Endothelial cell of umbilical vein (primary cell): ENCODE measurements at regions of chr12 and their contacts with region 1.

Region 1: GRCh38 chr12:91382081-91382543 is 199.5 kb upstream of the DCN start:
- DNase-seq: peak; percentile 91
- H3K4me3 ChIP-seq: peak overlapping the region; percentile 17 to 66 (median 34)
- H3K27ac ChIP-seq: peak overlapping the region; percentile 54
- H3K4me1 ChIP-seq: peaks cover 8% of the 10 kb centered on the region
- H3K27me3 ChIP-seq: no peaks in the 10 kb centered on the region
- CTCF ChIP-seq: peak; percentile 80 to 83
- POLR2A ChIP-seq: no peak

Region 2: GRCh38 chr12:91400271-91400670 is 18.2 kb after region 1 on chr12:
- CTCF ChIA-PET with region 1: interaction called, 56 read pairs
- POLR2A ChIA-PET with region 1: interaction called, 3 read pairs
- dilution Hi-C with region 1: no loop called
- intact Hi-C with region 1: no loop called
- DNase-seq: peak; percentile 93
- H3K4me3 ChIP-seq: no peak overlapping the region
- H3K27ac ChIP-seq: peak overlapping the region; percentile 48
- H3K4me1 ChIP-seq: peaks cover 22% of the 10 kb centered on the region
- H3K27me3 ChIP-seq: no peaks in the 10 kb centered on the region
- CTCF ChIP-seq: no peak
- POLR2A ChIP-seq: no peak

Region 3: DNA sequence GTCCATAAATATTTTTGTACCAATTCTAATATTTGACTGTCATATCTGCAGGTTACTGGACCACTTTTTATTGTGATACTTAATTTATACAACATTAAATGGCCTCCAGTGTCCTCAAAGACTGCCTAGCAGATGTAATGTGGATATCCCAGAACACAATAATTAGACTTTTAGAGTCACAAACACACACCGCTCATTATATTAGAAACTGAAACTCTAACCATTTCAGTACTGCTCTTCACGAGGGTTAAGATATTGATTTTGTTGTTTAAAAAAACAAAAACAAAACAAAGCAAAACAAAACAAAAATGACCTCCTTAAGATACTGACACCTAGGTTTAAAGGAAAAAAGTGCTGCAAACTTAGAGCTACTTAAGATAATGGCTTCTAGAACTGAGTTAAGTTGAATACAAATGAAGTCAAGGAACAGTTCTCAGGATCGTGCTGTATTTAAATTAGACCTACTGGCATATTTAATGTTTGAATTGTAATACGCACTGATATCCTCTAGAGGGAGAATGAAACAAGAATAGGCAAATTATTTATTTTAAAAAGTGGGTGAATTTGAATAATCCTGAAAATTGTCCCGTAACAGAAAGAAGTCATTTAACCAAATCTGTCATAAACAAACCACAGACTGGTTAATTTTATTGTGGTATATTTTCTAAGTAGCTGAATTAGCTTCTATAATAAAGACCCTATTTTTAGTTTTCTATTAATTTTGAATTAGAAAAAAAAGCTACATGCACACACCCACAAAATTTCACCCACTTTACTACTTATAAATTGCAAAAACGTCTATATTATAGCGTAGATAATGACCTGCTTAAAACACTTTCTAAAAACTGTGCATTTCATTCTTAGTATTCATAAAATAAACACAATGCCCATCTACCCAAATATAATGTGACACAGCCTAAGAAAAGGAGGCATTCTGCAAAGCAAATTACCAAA is 195.8 kb after region 1 on chr12:
- CTCF ChIA-PET with region 1: interaction called, 43 read pairs
- POLR2A ChIA-PET with region 1: no interaction called
- dilution Hi-C with region 1: no loop called
- intact Hi-C with region 1: loop called (anchors 1 kb)
- DNase-seq: peak; percentile 61
- H3K4me3 ChIP-seq: peak overlapping the region in 1 of 3 experiments; percentile 73
- H3K27ac ChIP-seq: no peak overlapping the region
- H3K4me1 ChIP-seq: peaks cover 4% of the 10 kb centered on the region
- H3K27me3 ChIP-seq: no peaks in the 10 kb centered on the region
- CTCF ChIP-seq: peak; percentile 20 to 21
- POLR2A ChIP-seq: no peak

Region 4: GRCh38 chr12:92136965-92137721 is 755.0 kb after region 1 on chr12:
- CTCF ChIA-PET with region 1: interaction called, 154 read pairs
- POLR2A ChIA-PET with region 1: interaction called, 5 read pairs
- dilution Hi-C with region 1: no loop called
- intact Hi-C with region 1: no loop called
- DNase-seq: peak; percentile 68
- H3K4me3 ChIP-seq: no peak overlapping the region
- H3K27ac ChIP-seq: peak overlapping the region; percentile 49
- H3K4me1 ChIP-seq: peaks cover 59% of the 10 kb centered on the region
- H3K27me3 ChIP-seq: no peaks in the 10 kb centered on the region
- CTCF ChIP-seq: no peak
- POLR2A ChIP-seq: no peak

Region 5: GRCh38 chr12:92244036-92244435 is 861.9 kb after region 1 on chr12:
- CTCF ChIA-PET with region 1: interaction called, 11 read pairs
- POLR2A ChIA-PET with region 1: no interaction called
- dilution Hi-C with region 1: no loop called
- intact Hi-C with region 1: no loop called
- DNase-seq: peak; percentile 74
- H3K4me3 ChIP-seq: no peak overlapping the region
- H3K27ac ChIP-seq: no peak overlapping the region
- H3K4me1 ChIP-seq: no peaks in the 10 kb centered on the region
- H3K27me3 ChIP-seq: no peaks in the 10 kb centered on the region
- CTCF ChIP-seq: no peak
- POLR2A ChIP-seq: no peak

Region 6: GRCh38 chr12:92570056-92570753 is 1188.1 kb after region 1 on chr12:
- CTCF ChIA-PET with region 1: interaction called, 86 read pairs
- POLR2A ChIA-PET with region 1: interaction called, 3 read pairs
- dilution Hi-C with region 1: no loop called
- intact Hi-C with region 1: loop called (anchors 1 kb)
- DNase-seq: peak; percentile 87
- H3K4me3 ChIP-seq: no peak overlapping the region
- H3K27ac ChIP-seq: no peak overlapping the region
- H3K4me1 ChIP-seq: no peaks in the 10 kb centered on the region
- H3K27me3 ChIP-seq: no peaks in the 10 kb centered on the region
- CTCF ChIP-seq: peak; percentile 43 to 45
- POLR2A ChIP-seq: no peak